Mammary epithelial cell (primary cell): ENCODE measurements at regions of chr6 and their contacts with region 1.

Region 1: DNA sequence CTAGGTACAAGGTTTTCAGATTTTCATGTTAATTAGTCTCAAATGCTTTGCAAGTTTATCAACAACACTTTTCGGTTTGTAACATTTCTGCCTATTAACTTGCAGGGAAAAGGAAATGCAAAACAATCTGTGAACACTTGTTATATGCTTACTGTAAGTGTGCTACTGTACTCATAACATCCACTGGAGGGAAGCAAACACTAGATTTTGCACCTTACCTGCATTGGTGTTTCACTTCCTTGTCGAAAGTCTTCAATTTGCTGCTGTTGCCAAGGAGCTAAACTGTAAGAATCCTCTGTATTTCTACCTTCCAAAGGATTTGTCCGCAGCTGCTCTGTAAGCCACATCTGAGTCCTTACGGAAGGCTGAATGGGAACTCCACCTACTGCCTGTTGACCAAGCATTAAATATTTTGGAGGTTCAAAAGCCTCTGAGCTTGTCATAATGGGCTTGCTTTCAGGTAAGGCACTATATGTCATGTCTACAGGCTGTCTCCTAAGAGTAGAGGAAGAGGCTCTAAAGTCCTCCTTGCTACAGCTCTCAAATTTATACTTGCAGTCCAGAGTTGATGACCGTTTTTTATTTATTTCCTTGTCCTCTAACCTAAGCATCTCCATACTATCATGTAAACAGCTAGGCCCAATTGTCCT is 17.3 kb downstream of the PLN start:
- DNase-seq: peak; percentile 54
- H3K4me3 ChIP-seq: no peak overlapping the region
- H3K27ac ChIP-seq: no peak overlapping the region
- H3K4me1 ChIP-seq: no peaks in the 10 kb centered on the region
- H3K27me3 ChIP-seq: no peaks in the 10 kb centered on the region
- CTCF ChIP-seq: peak; percentile 48 to 61

Region 2: DNA sequence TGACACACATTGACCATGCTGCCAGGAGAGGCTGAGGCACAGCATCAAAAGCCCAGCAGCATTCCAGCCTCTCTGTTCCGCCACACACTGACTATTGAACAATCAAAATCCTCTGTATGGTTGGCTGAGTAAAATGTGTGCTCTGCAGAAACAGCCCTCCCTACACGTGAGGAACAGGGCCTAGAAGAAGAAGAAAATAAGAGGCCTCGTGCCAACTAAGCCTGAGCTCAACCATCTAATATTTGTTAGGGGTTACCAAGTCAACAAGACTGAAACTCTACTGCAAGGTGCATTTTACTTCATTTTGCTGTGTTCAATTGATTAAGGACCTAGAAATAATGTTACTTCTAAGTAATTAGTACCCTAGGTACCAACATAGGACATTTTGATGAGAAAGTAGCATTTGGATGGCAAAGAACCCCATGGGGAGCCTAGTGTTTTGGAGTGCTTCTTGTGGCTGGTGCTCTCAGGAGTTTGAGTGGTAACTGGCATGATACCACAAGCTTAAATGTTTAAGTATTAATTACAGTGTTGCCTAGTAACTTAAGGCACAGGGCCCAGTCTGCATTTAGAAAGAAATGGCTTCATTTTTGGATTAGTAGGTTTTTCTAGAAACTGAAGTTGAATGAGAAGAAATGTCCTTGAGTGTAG is 164.0 kb before region 1 on chr6:
- CTCF ChIA-PET with region 1: no interaction called
- dilution Hi-C with region 1: no loop called
- in situ Hi-C with region 1: no loop called
- intact Hi-C with region 1: no loop called
- DNase-seq: no peak
- H3K4me3 ChIP-seq: no peak overlapping the region
- H3K27ac ChIP-seq: no peak overlapping the region
- H3K4me1 ChIP-seq: no peaks in the 10 kb centered on the region
- H3K27me3 ChIP-seq: no peaks in the 10 kb centered on the region
- CTCF ChIP-seq: no peak

Region 3: DNA sequence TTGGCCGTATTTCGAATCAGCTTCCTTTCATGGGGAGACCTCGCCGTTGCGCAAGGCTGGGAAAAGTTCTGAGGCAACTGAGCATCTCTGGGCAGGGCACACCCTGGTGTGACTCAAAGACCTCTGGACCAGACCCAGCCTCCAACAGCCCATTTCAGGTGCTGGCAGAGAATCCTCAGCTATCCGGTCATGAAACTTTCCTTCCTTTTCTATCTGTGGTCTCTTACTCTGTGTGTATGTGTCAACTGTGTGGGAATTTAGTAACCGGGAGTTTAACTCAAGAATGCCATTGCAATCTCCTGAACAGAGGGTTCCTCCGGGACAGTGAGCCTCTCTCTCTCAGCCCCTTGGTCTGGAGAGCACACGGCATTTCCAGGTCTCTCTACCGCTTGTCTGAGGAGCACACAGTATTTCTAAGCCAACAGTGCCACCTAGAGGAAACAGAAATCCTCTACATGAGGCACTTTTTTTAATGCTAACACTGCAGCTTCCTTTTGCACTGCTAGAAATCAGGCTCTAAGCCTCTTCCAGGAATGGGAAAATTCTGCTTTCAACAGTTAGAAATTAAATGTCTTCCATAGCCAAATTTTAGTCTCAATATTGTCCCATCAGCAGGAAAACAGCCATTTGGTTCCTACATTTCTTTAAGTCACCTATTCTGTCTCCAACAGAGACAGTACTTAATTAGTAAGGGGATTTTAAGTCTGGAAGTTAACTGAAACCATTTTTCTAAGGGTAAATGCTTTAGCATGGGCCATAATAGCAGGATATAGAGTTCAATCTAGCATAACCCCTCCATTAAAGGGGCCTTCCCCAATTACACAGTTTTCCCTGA is 15.4 kb after region 1 on chr6:
- CTCF ChIA-PET with region 1: interaction called, 4 read pairs
- dilution Hi-C with region 1: no loop called
- in situ Hi-C with region 1: no loop called
- intact Hi-C with region 1: loop called (anchors 1 kb)
- DNase-seq: peak; percentile 66
- H3K4me3 ChIP-seq: no peak overlapping the region
- H3K27ac ChIP-seq: no peak overlapping the region
- H3K4me1 ChIP-seq: peaks cover 6% of the 10 kb centered on the region
- H3K27me3 ChIP-seq: no peaks in the 10 kb centered on the region
- CTCF ChIP-seq: peak; percentile 45 to 71

Region 4: GRCh38 chr6:118618679-118619377 is 53.4 kb after region 1 on chr6:
- CTCF ChIA-PET with region 1: no interaction called
- dilution Hi-C with region 1: no loop called
- in situ Hi-C with region 1: no loop called
- intact Hi-C with region 1: loop called (anchors 1 kb)
- DNase-seq: peak; percentile 8
- H3K4me3 ChIP-seq: no peak overlapping the region
- H3K27ac ChIP-seq: no peak overlapping the region
- H3K4me1 ChIP-seq: no peaks in the 10 kb centered on the region
- H3K27me3 ChIP-seq: no peaks in the 10 kb centered on the region
- CTCF ChIP-seq: peak; percentile 90 to 93

Region 5: DNA sequence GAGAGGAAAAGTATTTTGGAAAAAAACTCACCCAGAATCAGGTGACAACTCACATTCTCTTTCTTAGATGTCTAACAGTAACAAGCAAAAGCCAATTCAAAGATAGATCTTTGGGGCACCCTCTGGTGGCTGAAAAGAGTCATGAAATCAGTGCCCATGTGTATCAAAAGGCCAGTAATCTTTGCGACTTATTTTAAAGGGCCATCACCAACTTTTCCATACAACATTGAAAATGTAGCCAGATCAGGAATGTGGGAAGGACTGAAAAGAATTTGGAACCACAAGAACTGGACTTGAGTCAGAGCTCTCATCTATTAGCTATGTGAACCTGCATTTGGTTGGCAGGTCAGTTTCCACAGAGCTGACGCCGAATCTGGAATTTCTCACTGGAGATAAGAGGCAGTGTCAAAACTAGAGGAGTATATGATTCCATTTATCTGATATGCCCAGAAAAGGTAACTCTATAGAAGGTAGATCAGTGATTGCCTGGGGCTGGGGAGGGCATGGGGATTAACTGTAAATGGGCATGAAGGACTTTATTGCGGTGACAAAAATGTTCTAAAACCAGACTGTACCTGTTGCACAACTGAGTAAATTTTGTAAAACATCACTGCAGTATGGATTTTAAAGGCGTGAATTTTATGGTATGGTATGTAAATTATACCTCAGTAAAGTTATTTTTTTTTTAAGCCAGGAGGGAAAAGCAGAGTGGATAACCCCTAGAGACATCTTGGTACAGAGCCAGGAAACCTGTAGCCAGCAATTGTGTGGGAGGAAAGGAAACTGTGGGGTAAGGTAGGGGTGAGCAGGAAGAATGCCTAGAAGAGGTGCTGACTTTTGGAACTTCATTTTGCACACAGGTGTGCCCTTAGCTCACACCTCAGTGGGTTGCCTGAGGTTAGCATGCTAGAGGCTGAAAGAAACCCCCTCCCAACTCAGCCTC is 211.4 kb after region 1 on chr6:
- CTCF ChIA-PET with region 1: no interaction called
- dilution Hi-C with region 1: no loop called
- in situ Hi-C with region 1: no loop called
- intact Hi-C with region 1: loop called (anchors 1 kb)
- DNase-seq: peak; percentile 88
- H3K4me3 ChIP-seq: peak overlapping the region in 2 of 3 experiments; percentile 10 to 23
- H3K27ac ChIP-seq: no peak overlapping the region
- H3K4me1 ChIP-seq: peaks cover 27% of the 10 kb centered on the region
- H3K27me3 ChIP-seq: no peaks in the 10 kb centered on the region
- CTCF ChIP-seq: peak; percentile 82 to 83

Region 6: GRCh38 chr6:118893807-118894424 is 328.5 kb after region 1 on chr6 and contains the start of gene ASF1A:
- CTCF ChIA-PET with region 1: interaction called, 3 read pairs
- dilution Hi-C with region 1: no loop called
- in situ Hi-C with region 1: no loop called
- intact Hi-C with region 1: loop called (anchors 5 kb)
- DNase-seq: peak; percentile 98
- H3K4me3 ChIP-seq: peak within 1 kb of the TSS; percentile 82 to 99 (median 97)
- H3K27ac ChIP-seq: peak within 1 kb of the TSS; percentile 89
- H3K4me1 ChIP-seq: peaks cover 22% of the 10 kb centered on the region
- H3K27me3 ChIP-seq: no peaks in the 10 kb centered on the region
- CTCF ChIP-seq: peak; percentile 50 to 74
- total RNA-seq, gene ASF1A: 19.8 to 29.0 TPM